ENCODE measurements at regions of chr12 and their contacts with region 1.

Region 1: DNA sequence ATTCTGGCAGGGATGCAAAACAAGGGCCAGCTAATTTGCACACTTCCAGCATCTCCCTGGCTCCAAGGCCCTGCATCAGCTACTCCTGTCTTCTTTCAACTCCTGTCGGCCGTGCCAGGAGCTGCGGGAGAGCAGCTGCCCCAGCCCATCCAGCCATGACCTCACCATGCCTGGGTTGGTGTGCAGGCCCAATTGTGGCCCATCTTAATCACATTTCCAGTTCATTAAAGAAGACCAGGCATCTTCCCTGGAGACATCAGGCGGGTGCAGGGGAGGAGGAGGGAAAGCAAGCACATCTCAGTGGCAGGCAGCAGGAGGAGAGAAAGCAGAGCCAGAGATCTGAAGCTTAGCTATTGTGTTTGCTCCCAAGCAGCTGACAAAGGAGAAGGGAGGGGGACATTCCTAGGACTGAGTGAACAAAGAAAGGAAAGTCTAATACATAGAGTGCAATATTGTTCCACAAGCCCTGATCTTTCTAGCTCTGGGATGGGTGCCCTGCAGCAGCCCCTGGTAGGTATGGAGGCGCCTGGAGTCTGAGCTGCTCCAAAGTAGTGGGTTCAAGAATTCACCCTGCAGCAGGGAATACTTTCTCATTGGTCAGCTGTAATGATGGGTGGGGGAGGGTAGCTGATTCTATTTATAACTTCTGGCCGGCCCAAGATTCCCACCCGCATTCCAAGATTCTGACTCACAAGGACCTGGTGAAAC is 40.1 kb downstream of the VWF start:
- DNase-seq: peak; percentile 50
- H3K4me3 ChIP-seq: no peak overlapping the region
- CTCF ChIP-seq: no peak

Region 2: GRCh38 chr12:6124411-6125309 is 40.2 kb after region 1 on chr12 and contains the start of gene VWF:
- in situ Hi-C with region 1: loop called (anchors 5 kb)
- DNase-seq: no peak
- H3K4me3 ChIP-seq: no peak within 1 kb of the TSS
- CTCF ChIP-seq: no peak

Region 3: DNA sequence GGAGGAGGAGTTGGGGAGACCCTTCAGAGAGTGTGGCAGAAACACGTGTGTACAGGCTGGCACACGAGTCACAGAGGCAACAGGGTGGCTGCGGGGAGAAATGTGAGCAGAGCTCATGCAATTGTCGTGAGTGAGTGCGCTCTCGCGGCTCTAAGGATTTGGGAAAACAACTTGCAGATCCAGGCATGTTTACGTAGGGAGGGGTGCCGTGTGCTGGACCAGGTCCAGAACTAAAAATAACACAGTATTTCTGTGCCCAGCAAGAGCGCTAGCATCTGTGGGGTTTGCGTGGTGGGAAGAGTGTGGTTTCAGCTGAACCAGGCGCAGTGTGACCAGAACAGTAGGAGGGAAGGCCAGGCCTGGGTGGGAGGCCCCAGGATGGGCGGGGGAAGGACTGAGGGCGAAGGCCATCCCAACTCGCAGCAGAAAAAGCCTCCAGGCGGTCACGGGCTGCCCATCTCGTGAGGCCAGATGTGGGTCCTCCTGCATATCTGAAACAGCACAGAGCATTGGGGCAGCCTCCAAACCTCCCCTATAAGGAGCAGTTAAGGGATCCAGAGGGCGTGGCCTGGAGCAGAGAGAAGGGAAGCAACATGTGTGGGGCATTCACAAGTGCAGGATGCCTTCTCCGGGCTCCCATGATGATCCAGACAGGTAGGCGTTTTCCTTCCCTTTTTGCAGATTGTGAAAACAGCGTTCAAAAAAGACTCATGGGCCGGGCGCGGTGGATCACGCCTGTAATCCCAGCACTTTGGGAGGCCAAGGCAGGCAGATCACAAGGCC is 97.9 kb after region 1 on chr12:
- in situ Hi-C with region 1: no loop called
- DNase-seq: no peak
- H3K4me3 ChIP-seq: no peak overlapping the region
- CTCF ChIP-seq: no peak

Region 4: DNA sequence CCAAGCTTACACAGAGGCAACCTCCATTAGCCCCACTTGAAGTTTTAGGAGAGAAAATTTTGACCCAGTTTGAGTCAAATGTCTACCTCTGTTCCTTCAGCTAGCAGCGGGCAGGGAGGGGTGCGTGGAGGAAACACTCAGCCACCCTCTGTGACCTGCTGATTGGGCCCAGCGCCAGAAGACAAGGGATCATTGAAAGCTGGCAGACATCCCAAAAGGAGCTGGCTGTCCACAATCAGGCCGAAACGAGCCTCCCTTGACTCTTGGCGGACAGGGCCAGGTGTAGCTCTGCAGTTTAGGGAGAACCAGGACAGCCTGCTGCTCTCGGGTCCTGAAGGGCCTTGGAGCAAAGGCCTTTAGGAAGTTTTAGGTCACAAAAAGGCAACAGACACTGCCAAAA is 157.1 kb after region 1 on chr12:
- in situ Hi-C with region 1: no loop called
- DNase-seq: no peak
- H3K4me3 ChIP-seq: no peak overlapping the region
- CTCF ChIP-seq: no peak

Region 5: GRCh38 chr12:6703631-6704030 is 619.2 kb after region 1 on chr12:
- in situ Hi-C with region 1: no loop called
- DNase-seq: no peak
- H3K4me3 ChIP-seq: no peak overlapping the region
- CTCF ChIP-seq: no peak